MCF 10A (cell line): ENCODE measurements at regions of chr20 and their contacts with region 1.

Region 1: DNA sequence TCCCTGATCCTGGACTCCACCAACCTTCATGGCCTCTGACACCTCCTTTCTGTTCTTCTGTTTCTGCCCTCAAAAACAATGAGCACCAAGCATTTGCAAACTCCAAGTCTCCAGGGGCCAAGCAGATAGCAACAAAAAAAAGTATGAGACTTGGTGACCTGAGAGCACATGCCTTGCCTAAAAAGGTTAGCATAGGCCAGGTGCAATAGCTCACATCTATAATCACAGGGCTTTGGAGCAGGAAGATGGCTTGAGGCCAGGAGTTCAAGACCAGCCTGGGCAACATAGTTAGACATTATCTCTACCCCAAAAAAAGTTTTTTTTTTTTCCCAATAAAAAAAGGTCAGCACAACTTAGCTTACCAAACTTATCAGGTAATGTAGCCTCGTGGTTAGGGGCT is 13.7 kb upstream of the HM13 start:
- DNase-seq: no peak
- H3K4me3 Mint-ChIP-seq: no peak overlapping the region
- H3K27ac Mint-ChIP-seq: no peak overlapping the region
- H3K4me1 Mint-ChIP-seq: no peaks in the 10 kb centered on the region
- H3K27me3 Mint-ChIP-seq: peaks cover 21% of the 10 kb centered on the region
- CTCF ChIP-seq: no peak

Region 2: GRCh38 chr20:31260326-31260932 is 240.1 kb before region 1 on chr20:
- CTCF ChIA-PET with region 1: interaction called, 22 read pairs
- POLR2A ChIA-PET with region 1: no interaction called
- intact Hi-C with region 1: no loop called
- DNase-seq: peak; percentile 27
- H3K4me3 Mint-ChIP-seq: no peak overlapping the region
- H3K27ac Mint-ChIP-seq: no peak overlapping the region
- H3K4me1 Mint-ChIP-seq: no peaks in the 10 kb centered on the region
- H3K27me3 Mint-ChIP-seq: no peaks in the 10 kb centered on the region
- CTCF ChIP-seq: peak; percentile 58

Region 3: GRCh38 chr20:31474097-31474436 is 26.5 kb before region 1 on chr20:
- CTCF ChIA-PET with region 1: interaction called, 225 read pairs
- POLR2A ChIA-PET with region 1: no interaction called
- intact Hi-C with region 1: no loop called
- DNase-seq: no peak
- H3K4me3 Mint-ChIP-seq: no peak overlapping the region
- H3K27ac Mint-ChIP-seq: no peak overlapping the region
- H3K4me1 Mint-ChIP-seq: peaks cover 15% of the 10 kb centered on the region
- H3K27me3 Mint-ChIP-seq: no peaks in the 10 kb centered on the region
- CTCF ChIP-seq: no peak

Region 4: DNA sequence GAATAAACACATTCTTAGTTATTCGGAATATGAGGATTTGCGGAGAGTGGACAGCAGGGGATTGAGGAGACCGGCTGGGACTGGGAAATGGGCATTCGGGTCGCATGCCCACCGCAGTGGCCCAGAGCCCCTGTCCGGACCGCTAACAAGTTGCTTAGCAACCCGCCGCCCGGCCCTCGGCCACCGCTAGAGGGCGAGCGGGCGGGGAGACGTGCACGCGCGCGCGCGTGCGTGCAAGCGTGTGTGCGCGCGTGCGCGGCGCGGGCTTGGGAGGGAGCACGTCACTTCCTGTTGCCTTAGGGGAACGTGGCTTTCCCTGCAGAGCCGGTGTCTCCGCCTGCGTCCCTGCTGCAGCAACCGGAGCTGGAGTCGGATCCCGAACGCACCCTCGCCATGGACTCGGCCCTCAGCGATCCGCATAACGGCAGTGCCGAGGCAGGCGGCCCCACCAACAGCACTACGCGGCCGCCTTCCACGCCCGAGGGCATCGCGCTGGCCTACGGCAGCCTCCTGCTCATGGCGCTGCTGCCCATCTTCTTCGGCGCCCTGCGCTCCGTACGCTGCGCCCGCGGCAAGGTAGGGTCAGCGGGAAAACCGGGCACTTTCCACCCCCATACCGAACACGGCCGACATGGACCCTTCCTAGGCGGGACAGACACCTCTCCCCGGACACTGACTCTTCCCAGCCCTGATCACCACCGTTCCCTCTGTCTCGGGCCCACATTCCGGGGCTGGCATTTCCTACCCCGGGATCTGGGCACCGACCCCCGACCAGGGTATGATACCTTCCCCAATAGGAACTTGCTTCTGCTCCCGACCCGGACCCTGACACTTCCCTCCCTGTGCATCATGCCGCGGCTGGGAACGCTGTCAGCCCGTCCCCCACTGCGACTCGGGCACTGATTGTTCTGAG is 13.9 kb after region 1 on chr20 and contains the start of gene HM13:
- CTCF ChIA-PET with region 1: interaction called, 60 read pairs
- POLR2A ChIA-PET with region 1: no interaction called
- intact Hi-C with region 1: no loop called
- DNase-seq: peak; percentile 91
- H3K4me3 Mint-ChIP-seq: no peak within 1 kb of the TSS
- H3K27ac Mint-ChIP-seq: no peak within 1 kb of the TSS
- H3K4me1 Mint-ChIP-seq: no peaks in the 10 kb centered on the region
- H3K27me3 Mint-ChIP-seq: no peaks in the 10 kb centered on the region
- CTCF ChIP-seq: peak; percentile 97
- total RNA-seq, gene HM13: 276 and 338 TPM in 2 replicates